Activated B cell treated with CpG ODN at 0.5 μM for 24 hours (primary cell): ENCODE measurements at regions of chr14 and their contacts with region 1.

Region 1: GRCh38 chr14:51860164-51860824 is at the start of gene GNG2:
- DNase-seq: peak; percentile 58
- ATAC-seq: peak; percentile 95
- H3K4me3 Mint-ChIP-seq: peak within 1 kb of the TSS; percentile 95
- H3K27ac Mint-ChIP-seq: peak within 1 kb of the TSS; percentile 88
- H3K4me1 Mint-ChIP-seq: peaks cover 70% of the 10 kb centered on the region
- H3K27me3 Mint-ChIP-seq: no peaks in the 10 kb centered on the region
- CTCF ChIP-seq: no peak
- total RNA-seq, gene GNG2: 68.7 and 70.0 TPM in 2 replicates

Region 2: DNA sequence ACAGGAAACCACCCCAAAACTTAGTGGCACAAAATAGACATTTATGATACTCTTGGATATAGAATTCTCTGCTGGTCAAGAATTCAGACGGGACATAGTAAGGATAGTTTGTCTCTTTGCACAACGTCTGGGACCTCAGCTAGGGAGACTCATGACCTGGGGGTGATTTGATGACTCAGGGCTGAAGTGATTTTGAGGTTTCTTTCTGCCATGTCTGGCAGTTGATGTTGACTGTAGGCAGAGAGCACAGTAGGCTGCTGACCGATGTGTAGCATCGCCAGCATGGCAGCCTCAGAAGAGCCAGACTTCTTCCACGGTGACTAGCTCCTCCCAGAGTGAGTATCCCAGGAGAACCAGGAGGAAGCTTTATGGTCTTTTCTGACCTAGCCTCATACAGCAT is 297.5 kb before region 1 on chr14:
- CTCF ChIA-PET with region 1: no interaction called
- POLR2A ChIA-PET with region 1: no interaction called
- intact Hi-C with region 1: no loop called
- DNase-seq: no peak
- ATAC-seq: no peak
- H3K4me3 Mint-ChIP-seq: no peak overlapping the region
- H3K27ac Mint-ChIP-seq: no peak overlapping the region
- H3K4me1 Mint-ChIP-seq: no peaks in the 10 kb centered on the region
- H3K27me3 Mint-ChIP-seq: no peaks in the 10 kb centered on the region
- CTCF ChIP-seq: no peak

Region 3: GRCh38 chr14:51732494-51733112 is 127.7 kb before region 1 on chr14:
- CTCF ChIA-PET with region 1: no interaction called
- POLR2A ChIA-PET with region 1: no interaction called
- intact Hi-C with region 1: no loop called
- DNase-seq: no peak
- ATAC-seq: no peak
- H3K4me3 Mint-ChIP-seq: no peak overlapping the region
- H3K27ac Mint-ChIP-seq: no peak overlapping the region
- H3K4me1 Mint-ChIP-seq: no peaks in the 10 kb centered on the region
- H3K27me3 Mint-ChIP-seq: peaks cover 17% of the 10 kb centered on the region
- CTCF ChIP-seq: no peak

Region 4: DNA sequence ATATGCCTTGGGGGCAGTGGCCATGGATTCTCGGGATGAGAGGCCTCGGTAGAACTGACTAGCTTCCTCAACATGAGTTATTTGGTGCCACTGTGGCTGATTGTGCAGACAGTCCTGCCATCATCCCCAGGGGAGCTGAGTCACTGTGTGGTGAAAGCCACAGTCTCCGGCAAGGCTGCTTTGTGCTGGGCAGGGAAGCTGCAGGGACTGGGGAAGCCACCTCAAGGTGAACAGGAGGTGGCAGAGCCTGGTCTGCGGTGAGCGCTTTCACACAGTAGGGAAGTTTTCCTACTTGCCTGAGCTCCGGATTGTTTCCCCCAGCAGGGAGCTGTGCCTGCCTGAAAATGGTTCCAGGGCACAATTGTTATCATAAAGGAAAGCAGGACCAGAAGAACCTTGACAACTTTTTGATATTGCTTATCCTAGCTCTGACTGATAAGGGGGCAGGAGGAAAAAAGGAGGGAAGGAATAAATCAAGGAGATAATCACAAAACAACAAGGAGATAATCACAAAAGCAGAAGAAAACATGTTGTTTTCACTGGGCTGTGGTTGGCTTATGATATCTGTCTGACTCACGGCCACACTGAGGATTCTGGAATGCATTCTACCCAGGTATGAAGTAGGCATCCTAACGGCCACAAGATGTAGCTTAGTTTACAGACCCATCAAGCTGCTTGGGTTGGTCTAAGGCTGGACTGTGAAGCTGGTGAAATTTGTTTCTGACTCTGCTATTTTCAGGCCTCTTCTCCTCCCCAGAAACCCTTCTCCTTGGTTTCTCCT is 32.1 kb before region 1 on chr14:
- CTCF ChIA-PET with region 1: interaction called, 4 read pairs
- POLR2A ChIA-PET with region 1: interaction called, 13 read pairs
- intact Hi-C with region 1: loop called (anchors 1 kb)
- DNase-seq: peak; percentile 64
- ATAC-seq: peak; percentile 99
- H3K4me3 Mint-ChIP-seq: no peak overlapping the region
- H3K27ac Mint-ChIP-seq: peak overlapping the region; percentile 6
- H3K4me1 Mint-ChIP-seq: no peaks in the 10 kb centered on the region
- H3K27me3 Mint-ChIP-seq: no peaks in the 10 kb centered on the region
- CTCF ChIP-seq: no peak

Region 5: DNA sequence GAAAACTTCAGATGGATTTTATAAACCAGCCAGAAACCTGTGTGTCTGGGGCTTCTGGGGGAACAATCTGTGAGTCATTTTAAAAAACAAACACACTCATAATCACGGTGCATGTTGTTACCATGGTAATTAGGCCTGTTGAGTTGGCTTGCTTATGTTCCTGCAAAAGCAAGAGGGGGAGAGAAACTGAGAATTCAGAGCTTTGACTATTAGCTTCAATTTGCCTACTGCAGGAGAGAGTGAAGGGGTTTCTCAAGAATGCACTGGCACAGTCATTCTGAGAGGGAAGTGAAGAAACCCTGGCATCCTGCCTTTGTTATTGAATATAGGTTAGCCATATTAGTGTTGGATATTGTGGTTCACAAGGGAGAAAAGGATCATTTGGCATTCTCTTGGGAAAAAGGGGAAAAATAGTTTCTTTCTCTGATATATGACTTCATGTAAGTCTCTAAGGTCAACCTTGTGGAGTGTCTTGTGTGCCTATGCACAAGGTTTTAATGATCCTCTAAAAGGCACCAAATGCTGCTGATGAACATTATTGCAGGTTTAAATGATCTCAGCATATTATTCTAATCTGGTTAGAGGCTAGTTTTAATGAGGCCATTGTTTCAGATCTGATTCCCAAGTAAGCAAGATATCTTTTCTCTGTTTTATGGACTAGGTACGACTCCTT is 13.1 kb after region 1 on chr14:
- CTCF ChIA-PET with region 1: interaction called, 5 read pairs
- POLR2A ChIA-PET with region 1: interaction called, 59 read pairs
- intact Hi-C with region 1: loop called (anchors 1 kb)
- DNase-seq: no peak
- ATAC-seq: peak; percentile 79
- H3K4me3 Mint-ChIP-seq: peak overlapping the region; percentile 50
- H3K27ac Mint-ChIP-seq: peak overlapping the region; percentile 89
- H3K4me1 Mint-ChIP-seq: peaks cover 56% of the 10 kb centered on the region
- H3K27me3 Mint-ChIP-seq: no peaks in the 10 kb centered on the region
- CTCF ChIP-seq: no peak

Region 6: DNA sequence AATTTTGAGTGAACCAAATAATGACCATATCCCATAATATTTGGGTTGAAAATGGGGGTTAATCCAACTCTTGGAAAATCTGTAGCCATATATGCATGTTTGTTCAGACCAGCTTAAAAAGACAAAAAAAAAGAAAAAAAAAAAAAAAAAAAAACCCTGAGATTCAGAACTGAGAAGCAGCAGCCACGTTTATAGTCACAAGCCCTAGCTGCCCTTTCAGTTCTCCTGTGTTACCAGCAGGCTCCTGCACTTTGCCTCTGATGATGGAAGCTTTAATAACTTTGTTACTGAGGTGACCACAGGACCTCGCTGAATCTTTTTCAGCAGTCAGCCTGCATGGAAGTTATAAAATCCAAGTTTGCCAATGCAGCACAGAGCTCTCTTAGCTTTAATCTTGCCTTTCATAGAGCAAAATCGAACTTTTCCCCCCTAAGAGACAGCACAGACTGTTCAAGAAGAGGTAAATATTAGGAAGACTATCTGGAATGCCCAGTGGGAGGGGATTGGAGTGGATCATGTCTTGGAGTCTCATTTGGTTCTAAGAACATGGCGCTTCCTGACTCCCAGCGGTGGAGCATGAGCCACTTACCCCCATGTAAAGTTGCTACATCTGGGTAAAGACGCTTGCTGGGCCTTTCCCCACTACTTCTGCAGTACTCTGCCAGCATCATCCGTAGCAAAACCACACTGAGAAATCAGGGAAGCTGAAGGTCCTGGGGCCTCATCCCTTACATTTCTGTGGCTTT is 20.7 kb after region 1 on chr14:
- CTCF ChIA-PET with region 1: no interaction called
- POLR2A ChIA-PET with region 1: interaction called, 27 read pairs
- intact Hi-C with region 1: loop called (anchors 2 kb)
- DNase-seq: no peak
- ATAC-seq: peak; percentile 48
- H3K4me3 Mint-ChIP-seq: peak overlapping the region; percentile 19
- H3K27ac Mint-ChIP-seq: peak overlapping the region; percentile 69
- H3K4me1 Mint-ChIP-seq: peaks cover 81% of the 10 kb centered on the region
- H3K27me3 Mint-ChIP-seq: no peaks in the 10 kb centered on the region
- CTCF ChIP-seq: no peak